HEK293 (cell line): ENCODE measurements at regions of chr9 and their contacts with region 1.

Region 1: DNA sequence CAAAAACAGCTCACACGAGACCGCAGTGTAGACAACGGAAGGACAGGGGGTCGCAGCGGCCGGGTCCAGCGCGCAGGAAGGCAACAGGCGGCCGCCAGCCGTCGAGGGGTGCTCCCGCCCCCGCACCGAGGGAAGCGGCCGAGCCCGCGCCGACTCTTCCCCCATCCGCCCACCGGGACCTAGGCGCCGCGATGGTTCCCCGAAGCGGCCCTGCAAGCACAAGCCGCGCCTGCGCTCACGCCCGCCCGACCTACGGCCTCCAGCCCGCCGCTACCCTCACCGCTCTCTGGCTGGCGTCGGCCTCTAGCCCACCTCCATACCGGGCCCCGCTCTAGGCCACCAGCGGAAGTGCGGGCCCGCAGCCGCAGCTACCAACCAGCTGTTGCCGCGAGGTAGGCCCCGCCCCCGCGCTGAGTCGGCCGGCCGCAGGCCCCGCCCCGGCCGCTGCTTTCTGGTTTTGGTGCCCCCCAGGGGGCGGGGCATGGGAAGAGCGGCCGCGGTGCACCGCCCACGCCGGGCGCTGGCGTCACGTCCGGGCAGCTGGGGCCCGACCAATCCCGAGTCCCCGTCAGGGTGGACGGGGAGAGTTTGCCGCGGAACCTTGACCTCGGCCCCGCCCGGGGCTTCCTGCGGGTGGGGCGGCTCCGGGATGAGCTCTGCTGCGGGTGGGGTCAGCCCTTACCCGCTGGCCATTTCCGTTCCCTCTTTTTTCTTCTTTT is at the start of gene SETX:
- H3K4me3 ChIP-seq: peak within 1 kb of the TSS; percentile 93
- H3K27ac ChIP-seq: peak within 1 kb of the TSS; percentile 81
- H3K4me1 ChIP-seq: no peaks in the 10 kb centered on the region
- CTCF ChIP-seq: no peak; the same call in 1 of the 2 replicates

Region 2: DNA sequence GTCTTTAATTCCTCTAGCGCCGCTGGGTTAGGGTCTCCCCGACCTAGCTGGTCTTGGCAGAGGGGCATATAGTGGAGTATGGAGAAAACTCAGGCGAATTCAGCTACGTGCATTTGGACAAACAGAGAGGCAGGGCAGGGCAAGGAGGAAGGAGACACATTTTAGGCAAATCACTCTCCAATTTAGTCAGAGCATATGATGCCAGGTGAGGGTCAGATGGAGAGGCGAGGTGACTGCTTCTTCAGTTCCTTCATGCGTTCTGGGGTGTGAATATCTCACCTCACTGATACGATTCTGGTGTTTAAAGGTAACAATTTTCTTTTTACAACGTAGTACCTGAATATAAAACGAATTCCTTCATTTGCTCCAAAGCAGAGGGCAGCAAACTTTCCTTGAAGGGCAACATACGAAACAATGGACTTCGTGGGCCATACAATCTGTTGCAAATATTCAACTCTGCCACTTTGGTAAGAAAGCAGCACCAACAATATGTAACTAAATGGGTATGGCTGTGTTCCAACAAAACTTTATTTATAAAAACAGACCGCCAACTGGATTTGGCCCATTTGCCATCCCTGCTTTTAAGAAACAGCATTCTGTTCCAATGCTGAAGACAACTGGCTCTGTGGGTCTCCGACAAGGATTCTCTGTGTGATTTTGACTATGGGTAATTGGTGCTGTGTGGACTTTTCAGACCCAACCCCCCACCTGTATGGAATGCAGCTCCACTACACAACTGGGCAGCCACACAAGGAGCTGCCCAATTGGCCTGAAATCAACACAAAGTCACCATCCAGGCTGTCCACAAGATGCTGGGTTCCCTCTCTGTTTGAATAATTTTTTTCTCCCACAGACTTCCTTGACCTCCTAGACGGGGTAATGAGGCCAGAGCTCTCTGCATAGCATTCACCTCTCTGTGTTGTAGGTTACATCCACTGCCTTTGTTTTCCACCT is 668.8 kb before region 1 on chr9:
- CTCF ChIA-PET with region 1: no interaction called
- POLR2A ChIA-PET with region 1: no interaction called
- H3K4me3 ChIP-seq: no peak overlapping the region
- H3K27ac ChIP-seq: no peak overlapping the region
- H3K4me1 ChIP-seq: no peaks in the 10 kb centered on the region
- CTCF ChIP-seq: no peak

Region 3: GRCh38 chr9:132274861-132275260 is 79.9 kb before region 1 on chr9:
- CTCF ChIA-PET with region 1: no interaction called
- POLR2A ChIA-PET with region 1: no interaction called
- H3K4me3 ChIP-seq: no peak overlapping the region
- H3K27ac ChIP-seq: no peak overlapping the region
- H3K4me1 ChIP-seq: no peaks in the 10 kb centered on the region
- CTCF ChIP-seq: no peak

Region 4: GRCh38 chr9:132372177-132373095 is 17.6 kb after region 1 on chr9:
- CTCF ChIA-PET with region 1: interaction called, 3 read pairs
- POLR2A ChIA-PET with region 1: interaction called, 20 read pairs
- H3K4me3 ChIP-seq: no peak overlapping the region
- H3K27ac ChIP-seq: no peak overlapping the region
- H3K4me1 ChIP-seq: no peaks in the 10 kb centered on the region
- CTCF ChIP-seq: no peak

Region 5: DNA sequence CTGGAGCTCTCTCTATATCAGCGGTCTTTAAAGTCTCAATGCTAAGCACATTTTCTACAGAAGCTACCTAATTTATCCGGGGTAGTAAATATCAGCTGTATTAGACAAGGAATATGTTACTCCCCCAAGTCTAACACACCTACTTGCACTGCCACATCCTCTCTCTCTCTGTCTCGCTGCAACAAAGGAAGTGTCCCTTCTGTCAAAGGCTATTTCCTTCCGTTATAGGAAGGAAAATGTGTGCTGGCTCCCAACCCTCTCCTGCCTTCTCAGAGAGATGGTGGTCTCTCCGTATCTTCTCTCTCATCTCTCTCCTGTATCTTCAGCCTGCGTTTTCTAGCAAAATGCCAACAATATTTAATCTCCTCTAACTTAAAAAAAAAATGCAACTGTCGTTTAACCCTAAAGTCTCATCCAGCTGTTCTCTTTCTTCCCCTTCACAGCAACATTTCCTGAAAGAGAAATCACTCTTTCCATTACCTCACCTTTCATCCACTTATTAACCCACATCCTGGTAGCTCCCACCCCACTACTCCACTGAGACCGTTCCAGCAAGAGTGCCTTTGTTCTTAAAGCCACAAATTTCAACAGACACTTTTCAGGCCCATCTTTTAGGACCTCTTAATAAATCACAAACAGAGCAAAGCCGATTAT is 49.6 kb after region 1 on chr9:
- CTCF ChIA-PET with region 1: no interaction called
- POLR2A ChIA-PET with region 1: interaction called, 11 read pairs
- H3K4me3 ChIP-seq: no peak overlapping the region
- H3K27ac ChIP-seq: no peak overlapping the region
- H3K4me1 ChIP-seq: no peaks in the 10 kb centered on the region
- CTCF ChIP-seq: no peak